HAP-1 (cell line): ENCODE measurements at regions of chr17 and their contacts with region 1.

Region 1: DNA sequence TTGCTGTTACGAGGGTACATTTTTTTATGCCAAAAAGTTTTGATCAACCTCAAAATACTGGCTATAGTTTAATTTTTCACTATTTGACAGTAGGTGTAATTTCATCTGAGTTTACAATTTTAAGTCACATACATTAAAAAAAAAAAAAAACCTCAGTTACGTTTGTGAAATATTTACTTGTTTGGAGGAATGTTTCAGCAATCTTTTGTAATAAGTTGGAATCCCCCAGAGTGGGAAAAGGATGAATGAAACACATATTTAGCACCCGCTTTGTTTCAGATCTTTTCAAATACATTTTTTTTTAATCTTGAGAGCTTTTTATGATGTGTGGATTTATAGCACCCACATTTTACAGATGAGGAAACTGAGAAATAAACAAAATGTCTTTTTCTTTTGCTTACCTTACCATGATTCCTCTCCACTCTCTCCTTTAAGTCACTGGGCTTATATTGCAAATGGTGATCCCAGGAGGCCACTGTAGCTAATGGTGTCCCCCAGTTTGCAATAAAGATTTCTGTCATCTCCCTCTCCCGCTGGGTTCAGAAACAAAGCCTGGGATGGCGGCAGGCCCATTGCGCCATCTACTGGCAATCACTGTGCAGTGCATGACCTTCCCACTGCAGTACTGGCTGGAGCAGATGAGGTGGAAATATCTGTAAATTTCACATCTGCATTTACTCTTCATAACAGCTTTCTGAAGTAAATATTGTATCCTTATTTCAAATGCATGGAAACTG is 27.7 kb downstream of the TBC1D3B start:
- DNase-seq: peak; percentile 67 to 71
- H3K4me3 ChIP-seq: no peak overlapping the region
- H3K4me1 ChIP-seq: no peaks in the 10 kb centered on the region
- H3K27me3 ChIP-seq: 0 out of 2 replicates have a peak, but pooled peaks cover 2% of the 10 kb centered on the region

Region 2: GRCh38 chr17:35969558-35970380 is 179.0 kb before region 1 on chr17:
- in situ Hi-C with region 1: loop called (anchors 5 kb)
- DNase-seq: peak; percentile 68 to 87
- H3K4me3 ChIP-seq: no peak overlapping the region
- H3K4me1 ChIP-seq: no peaks in the 10 kb centered on the region
- H3K27me3 ChIP-seq: no peaks in the 10 kb centered on the region

Region 3: DNA sequence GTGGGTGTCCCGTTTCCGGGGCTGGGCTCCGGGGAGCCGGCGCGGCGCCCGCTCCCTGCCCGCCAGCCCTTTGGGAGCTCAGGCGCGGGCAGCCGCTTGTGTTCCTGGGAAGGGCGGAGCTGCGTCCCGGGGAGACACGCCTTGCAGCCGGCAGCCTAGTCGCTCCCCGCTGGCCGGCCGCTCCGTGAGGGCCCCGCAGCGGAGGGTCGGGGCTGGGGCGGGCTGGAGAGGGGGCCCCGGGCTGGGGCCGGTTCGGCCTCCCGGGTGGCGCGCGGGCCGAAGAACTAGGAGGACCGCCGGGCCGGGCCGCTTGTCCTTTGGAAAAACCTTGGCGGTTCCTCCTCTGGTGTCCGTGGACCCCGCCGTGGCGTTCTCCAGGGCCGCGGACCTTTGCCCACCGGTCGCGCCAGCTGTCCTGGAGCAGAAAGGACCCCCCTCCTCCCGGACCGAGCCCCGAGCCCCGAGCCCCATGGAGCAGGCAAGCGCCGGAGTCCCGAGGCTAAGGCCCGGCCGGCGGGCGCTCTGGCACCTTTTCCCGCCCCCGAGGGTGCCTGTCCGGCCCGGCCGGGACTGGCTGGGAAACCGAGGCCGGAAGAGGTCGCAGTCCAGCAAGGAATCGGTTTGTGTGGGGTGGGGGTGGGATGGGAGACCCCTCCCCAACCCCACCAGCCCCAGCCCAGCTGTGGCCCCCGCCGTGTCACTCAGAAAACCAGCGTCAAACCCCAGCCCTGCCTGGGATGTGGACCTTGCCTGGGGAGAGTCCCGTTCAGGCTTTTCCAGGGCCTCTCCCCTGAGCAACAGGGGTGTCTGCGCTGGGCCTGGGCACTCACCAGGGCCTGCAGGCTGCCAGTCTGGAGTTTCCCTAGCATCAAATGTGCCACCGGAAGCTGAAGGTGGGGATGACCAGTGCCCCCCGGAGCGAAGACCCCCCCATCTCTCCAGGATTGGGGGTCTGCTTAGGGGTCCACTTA is 34.6 kb after region 1 on chr17:
- in situ Hi-C with region 1: no loop called
- DNase-seq: peak; percentile 43 to 79
- H3K4me3 ChIP-seq: peak overlapping the region; percentile 45
- H3K4me1 ChIP-seq: no peaks in the 10 kb centered on the region; the same call in 1 of the 2 replicates
- H3K27me3 ChIP-seq: no peaks in the 10 kb centered on the region

Region 4: GRCh38 chr17:36205637-36206485 is 57.1 kb after region 1 on chr17:
- in situ Hi-C with region 1: no loop called
- DNase-seq: no peak
- H3K4me3 ChIP-seq: no peak overlapping the region
- H3K4me1 ChIP-seq: no peaks in the 10 kb centered on the region
- H3K27me3 ChIP-seq: no peaks in the 10 kb centered on the region